Thyroid gland (tissue), 4 donors: ENCODE measurements at regions of chr10 and their contacts with region 1.

Region 1: GRCh38 chr10:22325272-22326144 is 4.6 kb downstream of the BMI1 start:
- DNase-seq: peak; percentile 67 to 69
- H3K4me3 ChIP-seq: peak overlapping the region in 1 of 3 donors; percentile 34
- H3K27ac ChIP-seq: peak overlapping the region in 2 of 3 donors; percentile 22 to 47
- H3K4me1 ChIP-seq: peaks cover 13 to 20% of the 10 kb centered on the region in 2 donors
- H3K27me3 ChIP-seq: peaks cover 2% of the 10 kb centered on the region
- CTCF ChIP-seq: no peak
- POLR2A ChIP-seq: no peak

Region 2: DNA sequence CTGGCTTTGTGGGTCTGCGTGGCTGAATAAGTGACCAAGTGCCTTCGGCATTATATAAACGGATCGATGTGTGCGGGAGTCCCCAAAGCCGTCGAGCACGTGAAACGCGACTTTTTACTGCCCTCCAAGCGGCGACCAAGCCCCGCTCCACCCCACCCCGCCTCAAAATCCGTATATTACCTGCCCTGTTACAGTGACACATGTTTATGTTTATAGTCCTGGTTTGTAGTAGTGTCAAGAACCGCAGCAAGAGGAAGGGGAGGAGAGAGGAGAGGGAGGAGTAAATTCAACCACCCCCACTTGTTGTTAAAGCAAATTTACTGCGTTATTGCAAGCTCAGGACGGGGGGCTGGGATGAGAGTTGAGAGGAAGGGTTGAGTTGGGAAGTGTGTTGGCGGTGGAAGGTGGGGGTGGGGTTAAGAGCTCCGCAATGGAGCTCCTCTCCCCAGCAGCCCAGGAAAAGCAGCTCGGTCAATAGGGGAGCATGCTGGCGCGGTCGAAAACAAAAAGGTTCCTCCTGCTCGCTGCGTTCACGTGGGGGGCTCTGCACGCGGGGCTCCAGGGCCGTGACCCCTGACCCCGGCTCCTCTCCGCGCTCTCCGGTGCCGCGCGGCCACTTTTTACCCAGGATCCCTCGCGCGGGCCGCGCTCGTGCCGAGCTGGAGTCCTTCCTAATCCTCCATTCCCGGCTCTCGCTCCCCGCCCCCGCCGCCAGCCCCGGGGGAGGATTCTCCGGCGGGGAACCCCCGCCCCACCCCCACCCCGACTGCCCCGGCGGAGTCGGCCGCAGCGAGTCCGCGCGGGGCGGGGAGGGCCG is 799.9 kb before region 1 on chr10 and contains the start of gene SKIDA1:
- intact Hi-C with region 1: loop called (anchors 10 kb)
- DNase-seq: peak; percentile 90 to 92
- H3K4me3 ChIP-seq: peak within 1 kb of the TSS; percentile 11 to 67 (median 17)
- H3K27ac ChIP-seq: peak within 1 kb of the TSS; percentile 92 to 99 (median 95)
- H3K4me1 ChIP-seq: peaks cover 0 to 9% of the 10 kb centered on the region in 2 donors
- H3K27me3 ChIP-seq: no peaks in the 10 kb centered on the region
- CTCF ChIP-seq: no peak
- POLR2A ChIP-seq: peak in 1 of 2 donors; percentile 59
- total RNA-seq, gene SKIDA1: 3.1 to 9.9 (median 7.1) TPM